ENCODE measurements at regions of chr2 and their contacts with region 1.

Region 1: GRCh38 chr2:171159372-171160118 is 1.1 kb downstream of the TLK1 start:
- DNase-seq: peak; percentile 67 to 82 (median 75)
- H3K4me3 ChIP-seq: peak overlapping the region; percentile 79 to 96 (median 93)
- H3K27ac ChIP-seq: peak overlapping the region; percentile 64 to 95
- H3K4me1 ChIP-seq: peaks cover 27 to 54% (median 37%) of the 10 kb centered on the region in 4 experiments
- H3K27me3 ChIP-seq: no peaks in the 10 kb centered on the region

Region 2: GRCh38 chr2:171008550-171009205 is 150.9 kb before region 1 on chr2:
- CTCF ChIA-PET with region 1: no interaction called
- POLR2A ChIA-PET with region 1: no interaction called
- DNase-seq: no peak
- H3K4me3 ChIP-seq: no peak overlapping the region
- H3K27ac ChIP-seq: no peak overlapping the region
- H3K4me1 ChIP-seq: no peaks in the 10 kb centered on the region
- H3K27me3 ChIP-seq: no peaks in the 10 kb centered on the region

Region 3: DNA sequence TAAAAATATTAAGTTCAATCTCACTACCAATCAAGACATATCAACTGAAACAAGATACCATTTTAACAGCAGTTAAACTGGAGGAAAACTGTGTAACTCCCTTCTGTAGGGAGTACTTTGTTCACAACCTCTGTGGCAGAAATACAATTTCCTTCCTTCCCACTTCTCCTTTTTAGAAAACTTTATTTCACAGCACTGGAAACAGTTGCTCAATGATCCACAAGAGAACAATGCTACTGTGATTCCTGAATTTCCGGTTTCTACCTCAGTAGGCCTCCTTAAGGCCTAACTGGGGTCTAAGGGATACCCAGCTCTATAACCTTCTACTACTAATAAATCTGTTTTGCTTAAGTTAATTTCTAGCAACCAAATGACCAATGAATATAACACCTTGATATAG is 12.9 kb before region 1 on chr2:
- CTCF ChIA-PET with region 1: interaction called, 16 read pairs
- POLR2A ChIA-PET with region 1: interaction called, 4 read pairs
- DNase-seq: peak in 2 of 3 donors; percentile 60 to 73
- H3K4me3 ChIP-seq: peak overlapping the region in 1 of 7 experiments; percentile 14
- H3K27ac ChIP-seq: peak overlapping the region in 1 of 2 experiments; percentile 7
- H3K4me1 ChIP-seq: peaks cover 6 to 43% (median 17%) of the 10 kb centered on the region in 4 experiments
- H3K27me3 ChIP-seq: no peaks in the 10 kb centered on the region

Measured in common myeloid progenitor, CD34-positive (primary cell).